ENCODE measurements at regions of chr2 and their contacts with region 1.

Region 1: DNA sequence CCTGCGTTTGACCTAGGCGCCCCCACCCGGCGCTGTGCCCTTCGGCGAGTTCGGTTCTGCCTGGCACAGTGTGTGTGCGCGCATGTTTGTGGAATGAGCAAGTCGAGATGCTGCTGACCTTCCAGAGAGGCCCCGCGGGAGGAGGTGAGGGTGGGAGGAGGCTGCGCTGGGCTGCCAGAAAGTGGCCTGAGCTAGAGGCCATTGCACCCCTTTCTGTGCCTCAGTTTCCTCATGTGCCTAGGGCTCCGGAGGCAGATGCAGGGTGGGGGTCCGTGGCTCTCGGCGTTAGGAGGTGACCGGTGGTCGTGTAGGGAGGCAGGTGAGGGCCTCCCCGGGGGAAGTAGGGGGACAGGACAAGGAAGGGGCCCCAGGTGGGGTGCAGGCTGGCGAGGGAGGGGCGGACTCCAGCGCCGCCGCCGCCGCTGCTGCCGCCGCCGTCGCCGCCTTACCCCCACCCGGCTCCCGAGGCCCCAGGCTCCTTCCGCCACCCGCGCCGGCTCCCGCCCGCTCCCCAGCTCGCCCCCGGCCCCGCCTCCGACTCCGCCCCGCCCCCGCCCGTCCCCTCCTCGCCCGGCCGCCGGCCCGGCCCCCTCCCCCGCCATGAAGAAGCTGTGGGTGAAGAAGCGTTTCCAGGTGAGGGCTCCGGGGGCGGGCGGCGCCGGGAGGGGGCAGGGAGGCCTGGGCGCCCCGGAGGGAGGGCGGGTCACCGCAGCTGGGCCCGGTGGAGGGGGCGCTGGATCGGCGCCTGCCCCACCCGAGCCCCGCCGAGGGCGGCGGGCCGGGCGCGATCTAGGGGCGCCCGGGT is 7.0 kb downstream of the SPEG start:
- DNase-seq: no peak
- H3K4me3 ChIP-seq: peak overlapping the region; percentile 65
- H3K27ac ChIP-seq: no peak overlapping the region
- H3K27me3 ChIP-seq: no peaks in the 10 kb centered on the region
- CTCF ChIP-seq: no peak

Region 2: GRCh38 chr2:219029829-219030165 is 411.9 kb before region 1 on chr2:
- CTCF ChIA-PET with region 1: no interaction called
- POLR2A ChIA-PET with region 1: no interaction called
- DNase-seq: peak; percentile 33
- H3K4me3 ChIP-seq: no peak overlapping the region
- H3K27ac ChIP-seq: no peak overlapping the region
- H3K27me3 ChIP-seq: peaks cover 41% of the 10 kb centered on the region
- CTCF ChIP-seq: peak; percentile 95

Region 3: GRCh38 chr2:219418570-219419189 is 23.0 kb before region 1 on chr2:
- CTCF ChIA-PET with region 1: no interaction called
- POLR2A ChIA-PET with region 1: no interaction called
- DNase-seq: no peak
- H3K4me3 ChIP-seq: no peak overlapping the region
- H3K27ac ChIP-seq: no peak overlapping the region
- H3K27me3 ChIP-seq: no peaks in the 10 kb centered on the region
- CTCF ChIP-seq: no peak

Region 4: DNA sequence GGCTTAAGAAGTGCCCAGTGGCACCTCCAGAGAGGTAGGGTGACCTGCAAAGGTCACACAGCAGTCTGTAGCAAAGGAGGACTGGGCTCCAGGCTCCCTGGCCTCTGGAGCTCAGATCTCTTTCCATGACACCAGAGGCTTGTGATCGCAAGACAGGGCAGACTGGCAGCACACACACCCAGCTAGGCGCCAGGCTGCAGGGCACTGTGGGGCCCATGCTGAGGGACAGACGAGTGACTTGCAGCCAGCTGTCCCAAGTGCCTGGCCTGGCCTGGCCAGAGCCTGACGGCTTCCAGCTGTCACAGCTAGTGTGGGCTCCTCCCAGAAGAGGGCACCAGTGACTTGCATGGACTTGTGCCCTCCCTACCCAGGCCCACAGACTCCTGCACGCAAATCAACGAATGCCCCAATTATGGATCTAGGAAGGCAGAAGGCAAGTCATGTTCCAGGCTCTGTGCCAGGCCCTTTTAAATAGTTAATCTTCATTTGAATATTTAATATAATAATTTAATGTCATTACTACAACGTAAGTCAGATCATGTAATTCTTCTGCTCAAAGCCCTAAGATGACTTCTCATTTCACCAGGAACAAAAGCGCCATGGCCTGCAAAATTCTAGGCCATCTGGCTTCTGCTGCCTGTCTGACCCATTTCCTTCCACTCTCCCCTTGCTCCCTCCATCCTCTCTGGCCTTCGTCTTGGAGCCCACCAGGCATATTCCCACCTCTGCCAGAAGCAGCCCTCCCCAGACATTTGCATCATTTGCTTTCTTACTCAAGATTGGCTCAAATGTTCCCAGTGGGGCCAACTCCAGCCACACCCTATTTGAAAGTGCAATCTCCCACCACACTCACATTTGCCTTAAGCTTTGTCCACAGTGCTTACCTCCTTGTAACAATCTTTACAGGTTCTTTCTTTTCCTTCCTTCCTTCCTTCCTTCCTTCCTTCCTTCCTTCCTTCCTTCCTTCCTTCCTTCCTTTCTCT is 10.7 kb before region 1 on chr2:
- CTCF ChIA-PET with region 1: interaction called, 4 read pairs
- POLR2A ChIA-PET with region 1: interaction called, 10 read pairs
- DNase-seq: no peak
- H3K4me3 ChIP-seq: no peak overlapping the region
- H3K27ac ChIP-seq: no peak overlapping the region
- H3K27me3 ChIP-seq: no peaks in the 10 kb centered on the region
- CTCF ChIP-seq: peak; percentile 14; the same call in 1 of the 2 replicates

Region 5: DNA sequence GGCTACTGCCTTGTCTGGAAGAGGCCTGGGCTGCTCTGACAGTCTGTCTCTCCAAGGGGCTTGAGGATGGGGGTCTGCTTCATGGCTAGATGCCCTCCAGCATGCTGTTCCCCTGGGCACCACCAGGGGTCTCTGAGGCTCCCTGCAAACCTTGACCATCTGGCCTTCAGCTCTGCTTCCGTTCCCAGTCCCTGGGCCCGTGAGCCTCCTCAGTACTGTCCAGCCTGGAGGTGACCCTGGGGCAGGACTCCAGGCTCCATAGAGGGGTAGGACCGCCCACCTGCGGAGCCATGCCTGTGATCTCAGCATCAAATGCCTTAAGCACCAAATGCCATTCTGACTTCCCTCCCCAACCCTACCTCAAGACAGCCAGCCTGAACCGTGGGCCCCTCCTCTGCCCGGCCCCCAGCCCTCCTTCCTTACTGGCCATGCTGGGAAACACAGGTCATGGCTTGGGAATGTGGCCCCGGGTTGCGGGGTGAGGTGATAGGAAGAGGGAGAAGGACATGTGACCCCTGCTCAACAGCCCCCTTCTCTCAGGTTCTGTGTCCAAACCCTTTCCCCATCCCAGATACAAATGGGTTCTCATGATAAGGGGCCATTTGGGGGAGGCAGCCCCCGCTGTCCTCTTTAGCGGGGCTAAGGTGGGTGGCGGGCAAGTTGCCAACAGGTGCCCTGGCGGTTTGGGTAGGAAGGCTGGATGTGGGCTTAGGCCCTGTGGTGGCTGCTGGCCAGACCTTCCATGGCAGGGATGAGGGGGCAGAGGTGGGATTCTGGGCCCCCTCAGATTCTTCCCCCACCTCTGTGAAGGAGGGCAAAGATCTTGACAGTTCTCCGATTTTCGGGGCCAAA is 18.0 kb after region 1 on chr2:
- CTCF ChIA-PET with region 1: interaction called, 18 read pairs
- POLR2A ChIA-PET with region 1: interaction called, 7 read pairs
- DNase-seq: no peak
- H3K4me3 ChIP-seq: no peak overlapping the region
- H3K27ac ChIP-seq: peak overlapping the region; percentile 70
- H3K27me3 ChIP-seq: no peaks in the 10 kb centered on the region
- CTCF ChIP-seq: peak; percentile 95